ENCODE measurements at regions of chr2 and their contacts with region 1.

Region 1: GRCh38 chr2:121530212-121530705 is 421 bp upstream of the RNU4ATAC start:
- DNase-seq: peak; percentile 77 to 84 (median 78)
- ATAC-seq: peak; percentile 76
- H3K4me3 ChIP-seq: peak overlapping the region; percentile 66
- H3K27ac ChIP-seq: peak overlapping the region; percentile 100
- H3K4me1 ChIP-seq: peaks cover 30 to 35% of the 10 kb centered on the region in 2 experiments
- H3K27me3 ChIP-seq: no peaks in the 10 kb centered on the region
- CTCF ChIP-seq: no peak
- EP300 ChIP-seq: no peak
- POLR2A ChIP-seq: no peak
- RAD21 ChIP-seq: no peak

Region 2: GRCh38 chr2:119862127-119862889 is 1668.0 kb before region 1 on chr2:
- CTCF ChIA-PET with region 1: no interaction called
- POLR2A ChIA-PET with region 1: no interaction called
- in situ Hi-C with region 1: loop called (anchors 10 kb)
- intact Hi-C with region 1: no loop called
- DNase-seq: no peak
- ATAC-seq: no peak
- H3K4me3 ChIP-seq: no peak overlapping the region
- H3K27ac ChIP-seq: no peak overlapping the region
- H3K4me1 ChIP-seq: peaks cover 0 to 34% of the 10 kb centered on the region in 2 experiments; a peak in 4 of 5 replicates
- H3K27me3 ChIP-seq: no peaks in the 10 kb centered on the region
- CTCF ChIP-seq: no peak
- EP300 ChIP-seq: no peak
- POLR2A ChIP-seq: no peak
- RAD21 ChIP-seq: no peak

Region 3: GRCh38 chr2:121237980-121238665 is 292.1 kb before region 1 on chr2:
- CTCF ChIA-PET with region 1: no interaction called
- POLR2A ChIA-PET with region 1: no interaction called
- in situ Hi-C with region 1: no loop called
- intact Hi-C with region 1: no loop called
- DNase-seq: peak in 1 of 4 experiments; percentile 16
- ATAC-seq: peak; percentile 39; the same call in 1 of the 3 replicates
- H3K4me3 ChIP-seq: no peak overlapping the region
- H3K27ac ChIP-seq: no peak overlapping the region
- H3K4me1 ChIP-seq: no peaks in the 10 kb centered on the region
- H3K27me3 ChIP-seq: peaks cover 37 to 88% of the 10 kb centered on the region in 2 experiments; a peak in 4 of 5 replicates
- CTCF ChIP-seq: no peak
- EP300 ChIP-seq: no peak
- POLR2A ChIP-seq: no peak
- RAD21 ChIP-seq: no peak

Region 4: GRCh38 chr2:121359716-121360565 is 170.3 kb before region 1 on chr2:
- CTCF ChIA-PET with region 1: no interaction called
- POLR2A ChIA-PET with region 1: no interaction called
- in situ Hi-C with region 1: no loop called
- intact Hi-C with region 1: no loop called
- DNase-seq: no peak
- ATAC-seq: no peak
- H3K4me3 ChIP-seq: no peak overlapping the region
- H3K27ac ChIP-seq: no peak overlapping the region
- H3K4me1 ChIP-seq: no peaks in the 10 kb centered on the region
- H3K27me3 ChIP-seq: no peaks in the 10 kb centered on the region
- CTCF ChIP-seq: no peak
- EP300 ChIP-seq: no peak
- POLR2A ChIP-seq: no peak
- RAD21 ChIP-seq: no peak

Region 5: DNA sequence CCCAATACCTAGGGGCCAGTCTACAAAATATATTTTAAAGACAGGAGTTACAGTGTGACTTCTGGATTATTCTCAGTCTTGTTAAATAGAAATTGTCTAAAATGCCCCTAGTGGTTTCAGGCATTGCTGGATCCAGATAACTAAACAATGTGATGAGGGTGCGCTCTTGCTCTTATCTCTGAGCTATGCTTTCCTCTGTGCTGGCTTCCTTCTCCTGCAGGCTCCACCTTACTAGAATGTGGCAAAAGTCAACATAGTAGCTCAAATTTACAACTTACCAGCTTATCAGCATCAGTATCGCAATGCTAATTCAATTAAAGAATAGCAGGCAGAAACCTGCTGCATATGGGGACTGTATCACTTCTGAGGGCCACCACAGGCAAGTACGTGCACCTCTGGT is 60.9 kb before region 1 on chr2:
- CTCF ChIA-PET with region 1: no interaction called
- POLR2A ChIA-PET with region 1: no interaction called
- in situ Hi-C with region 1: no loop called
- intact Hi-C with region 1: no loop called
- DNase-seq: no peak
- ATAC-seq: peak; percentile 28; the same call in 1 of the 3 replicates
- H3K4me3 ChIP-seq: no peak overlapping the region
- H3K27ac ChIP-seq: no peak overlapping the region
- H3K4me1 ChIP-seq: peaks cover 4 to 9% of the 10 kb centered on the region in 2 experiments; a peak in 2 of 5 replicates
- H3K27me3 ChIP-seq: no peaks in the 10 kb centered on the region
- CTCF ChIP-seq: no peak
- EP300 ChIP-seq: no peak
- POLR2A ChIP-seq: no peak
- RAD21 ChIP-seq: no peak

Region 6: GRCh38 chr2:121489284-121489683 is 41.0 kb before region 1 on chr2:
- CTCF ChIA-PET with region 1: no interaction called
- POLR2A ChIA-PET with region 1: no interaction called
- in situ Hi-C with region 1: no loop called
- intact Hi-C with region 1: no loop called
- DNase-seq: no peak
- ATAC-seq: peak; percentile 44; the same call in 1 of the 3 replicates
- H3K4me3 ChIP-seq: no peak overlapping the region
- H3K27ac ChIP-seq: no peak overlapping the region
- H3K4me1 ChIP-seq: peaks cover 0 to 7% of the 10 kb centered on the region in 2 experiments; a peak in 1 of 5 replicates
- H3K27me3 ChIP-seq: no peaks in the 10 kb centered on the region
- CTCF ChIP-seq: no peak
- EP300 ChIP-seq: no peak
- POLR2A ChIP-seq: no peak
- RAD21 ChIP-seq: no peak

Region 7: GRCh38 chr2:121505005-121505404 is 25.3 kb before region 1 on chr2:
- CTCF ChIA-PET with region 1: no interaction called
- POLR2A ChIA-PET with region 1: interaction called, 12 read pairs
- in situ Hi-C with region 1: no loop called
- intact Hi-C with region 1: no loop called
- DNase-seq: no peak
- ATAC-seq: no peak
- H3K4me3 ChIP-seq: no peak overlapping the region
- H3K27ac ChIP-seq: no peak overlapping the region
- H3K4me1 ChIP-seq: no peaks in the 10 kb centered on the region
- H3K27me3 ChIP-seq: no peaks in the 10 kb centered on the region
- CTCF ChIP-seq: no peak
- EP300 ChIP-seq: no peak
- POLR2A ChIP-seq: no peak
- RAD21 ChIP-seq: no peak

Region 8: GRCh38 chr2:121547646-121548045 is 17.4 kb after region 1 on chr2:
- CTCF ChIA-PET with region 1: no interaction called
- POLR2A ChIA-PET with region 1: interaction called, 23 read pairs
- in situ Hi-C with region 1: no loop called
- intact Hi-C with region 1: no loop called
- DNase-seq: no peak
- ATAC-seq: no peak
- H3K4me3 ChIP-seq: no peak overlapping the region
- H3K27ac ChIP-seq: no peak overlapping the region
- H3K4me1 ChIP-seq: no peaks in the 10 kb centered on the region; a peak in 1 of 5 replicates
- H3K27me3 ChIP-seq: no peaks in the 10 kb centered on the region
- CTCF ChIP-seq: no peak
- EP300 ChIP-seq: no peak
- POLR2A ChIP-seq: no peak
- RAD21 ChIP-seq: no peak

Region 9: DNA sequence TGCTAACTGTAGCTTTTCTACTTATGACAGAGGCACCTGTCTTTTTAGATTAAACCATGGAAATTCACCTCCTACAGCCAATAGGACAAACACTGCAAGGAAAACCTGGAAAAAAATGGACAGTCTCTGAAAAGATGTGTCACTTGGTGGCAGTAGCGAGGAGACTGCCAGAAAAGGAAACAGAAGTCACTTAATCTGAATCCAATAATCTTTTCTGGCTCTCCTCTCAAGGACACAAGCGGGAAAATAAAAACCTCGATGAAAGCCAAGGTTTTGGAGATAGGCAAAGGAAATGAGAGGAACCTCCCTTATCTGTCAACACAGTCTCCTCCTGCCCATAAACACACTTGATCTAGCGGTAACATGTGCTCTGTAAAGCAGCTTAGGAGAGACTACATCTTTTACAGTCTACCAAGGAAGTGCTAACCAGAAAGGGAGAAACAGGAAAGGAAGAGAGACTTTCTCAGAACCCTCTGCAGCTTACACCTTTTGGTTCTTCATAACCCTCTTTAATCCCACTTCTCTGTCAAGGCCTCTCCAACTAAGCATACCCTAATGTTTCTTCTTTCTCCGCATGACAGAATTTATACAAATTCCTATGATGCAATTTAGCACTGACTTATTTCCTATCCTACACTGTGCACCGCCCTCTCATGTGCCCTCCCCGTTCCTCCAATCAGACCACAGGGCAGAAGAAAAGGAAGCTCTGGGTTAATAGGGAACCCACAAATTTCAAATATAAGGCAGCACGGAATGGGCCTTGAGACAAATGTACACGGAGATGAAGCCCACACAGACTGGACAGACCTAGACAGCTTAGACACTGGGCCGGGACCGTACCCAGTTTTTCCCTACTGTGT is 66.2 kb after region 1 on chr2:
- CTCF ChIA-PET with region 1: no interaction called
- POLR2A ChIA-PET with region 1: interaction called, 18 read pairs
- in situ Hi-C with region 1: no loop called
- intact Hi-C with region 1: loop called (anchors 1 kb)
- DNase-seq: peak; percentile 76 to 93 (median 80)
- ATAC-seq: peak; percentile 93
- H3K4me3 ChIP-seq: peak overlapping the region; percentile 35
- H3K27ac ChIP-seq: peak overlapping the region; percentile 93
- H3K4me1 ChIP-seq: peaks cover 0 to 35% of the 10 kb centered on the region in 2 experiments; a peak in 4 of 5 replicates
- H3K27me3 ChIP-seq: no peaks in the 10 kb centered on the region
- CTCF ChIP-seq: peak; percentile 46 to 82 (median 74); a peak in 4 of 6 replicates
- EP300 ChIP-seq: peak; percentile 96
- POLR2A ChIP-seq: peak; percentile 63; the same call in 1 of the 2 replicates
- RAD21 ChIP-seq: peak; percentile 62 to 74

Region 10: GRCh38 chr2:121722479-121722878 is 192.2 kb after region 1 on chr2:
- CTCF ChIA-PET with region 1: no interaction called
- POLR2A ChIA-PET with region 1: interaction called, 15 read pairs
- in situ Hi-C with region 1: no loop called
- intact Hi-C with region 1: loop called (anchors 1 kb)
- DNase-seq: peak in 2 of 4 experiments; percentile 62 to 63
- ATAC-seq: peak; percentile 74
- H3K4me3 ChIP-seq: no peak overlapping the region
- H3K27ac ChIP-seq: no peak overlapping the region
- H3K4me1 ChIP-seq: peaks cover 6 to 16% of the 10 kb centered on the region in 2 experiments; a peak in 4 of 5 replicates
- H3K27me3 ChIP-seq: no peaks in the 10 kb centered on the region
- CTCF ChIP-seq: no peak
- EP300 ChIP-seq: no peak
- POLR2A ChIP-seq: no peak
- RAD21 ChIP-seq: 0 out of 4 replicates have a peak, but pooled peaks of 1 of the 2 experiments have one; percentile 21

Region 11: GRCh38 chr2:121748202-121748601 is 217.9 kb after region 1 on chr2:
- CTCF ChIA-PET with region 1: no interaction called
- POLR2A ChIA-PET with region 1: interaction called, 5 read pairs
- in situ Hi-C with region 1: no loop called
- intact Hi-C with region 1: loop called (anchors 1 kb)
- DNase-seq: peak in 3 of 4 experiments; percentile 13 to 76 (median 57)
- ATAC-seq: peak; percentile 98
- H3K4me3 ChIP-seq: no peak overlapping the region
- H3K27ac ChIP-seq: no peak overlapping the region
- H3K4me1 ChIP-seq: peaks cover 0 to 5% of the 10 kb centered on the region in 2 experiments; a peak in 2 of 5 replicates
- H3K27me3 ChIP-seq: no peaks in the 10 kb centered on the region
- CTCF ChIP-seq: peak; percentile 65 to 72 (median 66)
- EP300 ChIP-seq: no peak
- POLR2A ChIP-seq: no peak
- RAD21 ChIP-seq: peak; percentile 53 to 79; a peak in 3 of 4 replicates

Measured in K562 (cell line).